Activated CD4-positive, alpha-beta memory T cell treated with anti-CD3 and anti-CD28 coated beads, Interleukin-2, amount 10 ng/mL, durations not matched to agents 7 days and 5 days (primary cell): ENCODE measurements at regions of chr10 and their contacts with region 1.

Region 1: DNA sequence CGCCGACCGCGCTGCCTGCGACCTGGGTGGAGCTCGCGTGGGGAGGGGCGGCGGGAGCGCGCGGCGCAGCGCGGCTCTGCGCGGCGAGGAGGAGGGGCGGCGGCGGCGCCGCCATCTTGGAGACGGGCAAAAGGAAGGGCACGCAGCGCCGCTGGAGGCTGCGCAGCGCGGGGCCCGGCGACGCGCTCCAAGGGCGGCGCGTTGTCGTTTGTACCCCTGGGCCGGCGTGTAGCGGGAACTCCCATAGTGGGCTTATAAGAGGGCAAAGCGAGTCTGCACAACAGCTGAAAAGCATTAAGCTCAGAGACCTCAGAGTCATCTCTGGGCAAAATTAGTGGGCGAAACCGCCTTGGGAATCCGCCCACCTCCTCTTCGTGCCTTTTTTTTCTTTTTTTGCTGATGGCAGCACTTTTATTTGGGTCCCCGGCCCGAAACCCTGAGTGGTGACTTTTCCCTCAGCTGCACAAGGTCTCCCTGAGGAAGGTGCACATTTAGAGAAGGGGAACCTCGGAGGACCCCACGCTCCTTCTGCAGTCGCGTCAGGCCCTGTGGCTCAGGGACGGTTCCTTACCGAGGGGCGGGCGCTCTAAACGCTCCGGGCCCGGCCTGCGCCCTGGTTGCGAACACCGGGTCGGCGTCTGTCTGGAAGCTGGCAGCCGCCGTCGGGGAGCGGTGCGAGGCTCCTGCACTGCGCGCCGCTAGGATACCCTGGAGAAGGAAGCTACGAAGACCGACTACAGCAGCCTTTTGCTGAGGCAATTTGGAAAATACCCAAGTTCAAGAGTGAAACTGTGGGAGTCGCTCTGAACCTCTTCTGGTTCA is 428 bp upstream of the MCMBP start:
- DNase-seq: peak; percentile 91
- H3K4me3 Mint-ChIP-seq: peak overlapping the region; percentile 78
- H3K27ac Mint-ChIP-seq: peak overlapping the region; percentile 82
- H3K4me1 Mint-ChIP-seq: peaks cover 35% of the 10 kb centered on the region
- H3K27me3 Mint-ChIP-seq: no peaks in the 10 kb centered on the region

Region 2: DNA sequence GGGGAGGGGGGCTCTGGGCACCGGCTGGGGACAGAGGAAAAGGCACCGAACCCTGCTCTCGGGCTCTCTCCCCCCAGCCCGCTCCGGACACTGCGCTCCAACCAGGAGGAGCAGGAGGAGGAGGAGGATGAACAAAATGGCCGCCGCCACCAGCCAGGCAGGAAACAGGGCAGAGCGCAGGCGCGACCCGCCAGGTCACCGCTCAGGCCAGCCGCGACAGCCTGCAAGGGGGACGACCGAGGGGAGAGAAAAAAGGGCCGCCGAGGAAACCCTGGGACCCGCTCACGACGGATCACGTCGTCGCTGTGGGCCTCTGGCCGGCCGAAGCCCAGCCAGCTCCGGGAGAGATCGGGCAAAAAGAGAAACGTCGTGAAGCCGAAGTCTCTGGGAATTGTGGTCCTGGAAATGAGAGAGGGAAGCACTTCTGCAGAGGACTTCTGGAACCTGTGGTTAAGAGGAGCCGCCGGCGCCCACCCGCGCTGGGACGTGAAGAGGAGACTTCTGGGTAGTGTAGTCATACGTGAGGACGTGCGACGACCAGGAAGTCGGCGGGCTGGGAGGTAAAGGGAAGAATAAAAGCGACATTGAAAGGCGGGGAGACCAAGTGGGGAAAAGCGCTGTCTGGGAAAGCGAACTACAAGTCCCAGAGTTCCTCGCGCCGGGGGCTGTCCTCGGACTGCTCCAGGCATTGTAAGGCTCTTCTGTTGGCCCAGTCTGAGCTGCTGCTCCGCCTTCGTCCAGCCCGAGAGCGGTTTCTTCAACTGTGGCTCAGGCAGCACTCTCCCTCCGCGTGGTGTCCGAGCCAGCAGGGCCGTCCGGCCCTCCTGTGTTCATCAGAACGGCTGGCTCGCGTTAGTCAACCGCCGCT is 276.3 kb before region 1 on chr10 and contains the start of gene TIAL1:
- CTCF ChIA-PET with region 1: no interaction called
- POLR2A ChIA-PET with region 1: interaction called, 18 read pairs
- DNase-seq: peak; percentile 96
- H3K4me3 Mint-ChIP-seq: peak within 1 kb of the TSS; percentile 92
- H3K27ac Mint-ChIP-seq: peak within 1 kb of the TSS; percentile 97
- H3K4me1 Mint-ChIP-seq: peaks cover 45% of the 10 kb centered on the region
- H3K27me3 Mint-ChIP-seq: no peaks in the 10 kb centered on the region
- total RNA-seq, gene TIAL1: 168 to 170 TPM

Region 3: DNA sequence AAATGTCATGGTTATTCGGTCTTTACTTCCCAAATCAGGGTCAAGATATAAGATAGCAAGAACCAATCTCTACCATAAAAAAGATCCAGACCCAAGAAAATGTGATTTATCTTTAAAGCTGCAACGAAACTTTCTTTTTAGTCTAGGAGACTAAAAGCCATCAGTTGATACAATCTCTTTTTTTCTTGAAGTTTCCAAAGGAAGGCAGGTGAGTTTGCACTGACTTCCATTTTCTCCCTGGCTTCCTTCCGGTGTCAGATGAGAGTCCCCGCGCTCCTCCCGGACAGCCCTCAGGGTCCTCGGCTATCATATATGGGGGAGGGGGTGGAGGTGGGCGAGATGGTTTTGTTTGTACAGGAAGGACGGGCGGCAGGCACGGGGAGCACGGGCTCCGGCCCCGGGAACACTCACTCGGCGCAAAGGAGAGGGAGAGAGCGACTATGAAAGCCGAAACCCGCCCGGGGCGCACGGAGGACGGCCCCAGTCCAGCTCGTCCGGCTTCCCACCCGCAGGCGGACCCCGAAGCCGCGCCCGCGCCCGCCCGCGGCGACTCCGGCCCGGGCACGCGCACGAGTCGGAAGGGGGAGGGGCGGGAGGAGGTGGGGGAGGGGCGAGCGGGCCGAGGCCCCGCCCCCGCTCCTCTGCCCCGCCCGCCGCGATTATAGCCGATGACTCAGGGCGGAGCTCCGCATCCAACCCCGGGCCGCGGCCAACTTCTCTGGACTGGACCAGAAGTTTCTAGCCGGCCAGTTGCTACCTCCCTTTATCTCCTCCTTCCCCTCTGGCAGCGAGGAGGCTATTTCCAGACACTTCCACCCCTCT is 222.2 kb before region 1 on chr10 and contains the start of gene BAG3:
- CTCF ChIA-PET with region 1: interaction called, 3 read pairs
- POLR2A ChIA-PET with region 1: interaction called, 37 read pairs
- DNase-seq: peak; percentile 86
- H3K4me3 Mint-ChIP-seq: peak within 1 kb of the TSS; percentile 95
- H3K27ac Mint-ChIP-seq: peak within 1 kb of the TSS; percentile 91
- H3K4me1 Mint-ChIP-seq: peaks cover 43% of the 10 kb centered on the region
- H3K27me3 Mint-ChIP-seq: peaks cover 3% of the 10 kb centered on the region
- total RNA-seq, gene BAG3: 26.3 to 27.2 TPM

Region 4: GRCh38 chr10:119705434-119705831 is 167.6 kb before region 1 on chr10:
- CTCF ChIA-PET with region 1: no interaction called
- POLR2A ChIA-PET with region 1: interaction called, 19 read pairs
- DNase-seq: no peak
- H3K4me3 Mint-ChIP-seq: peak overlapping the region; percentile 72
- H3K27ac Mint-ChIP-seq: peak overlapping the region; percentile 92
- H3K4me1 Mint-ChIP-seq: peaks cover 57% of the 10 kb centered on the region
- H3K27me3 Mint-ChIP-seq: no peaks in the 10 kb centered on the region

Region 5: GRCh38 chr10:119750391-119751230 is 122.5 kb before region 1 on chr10:
- CTCF ChIA-PET with region 1: interaction called, 12 read pairs
- POLR2A ChIA-PET with region 1: interaction called, 4 read pairs
- DNase-seq: peak; percentile 69
- H3K4me3 Mint-ChIP-seq: no peak overlapping the region
- H3K27ac Mint-ChIP-seq: no peak overlapping the region
- H3K4me1 Mint-ChIP-seq: peaks cover 5% of the 10 kb centered on the region
- H3K27me3 Mint-ChIP-seq: no peaks in the 10 kb centered on the region

Region 6: DNA sequence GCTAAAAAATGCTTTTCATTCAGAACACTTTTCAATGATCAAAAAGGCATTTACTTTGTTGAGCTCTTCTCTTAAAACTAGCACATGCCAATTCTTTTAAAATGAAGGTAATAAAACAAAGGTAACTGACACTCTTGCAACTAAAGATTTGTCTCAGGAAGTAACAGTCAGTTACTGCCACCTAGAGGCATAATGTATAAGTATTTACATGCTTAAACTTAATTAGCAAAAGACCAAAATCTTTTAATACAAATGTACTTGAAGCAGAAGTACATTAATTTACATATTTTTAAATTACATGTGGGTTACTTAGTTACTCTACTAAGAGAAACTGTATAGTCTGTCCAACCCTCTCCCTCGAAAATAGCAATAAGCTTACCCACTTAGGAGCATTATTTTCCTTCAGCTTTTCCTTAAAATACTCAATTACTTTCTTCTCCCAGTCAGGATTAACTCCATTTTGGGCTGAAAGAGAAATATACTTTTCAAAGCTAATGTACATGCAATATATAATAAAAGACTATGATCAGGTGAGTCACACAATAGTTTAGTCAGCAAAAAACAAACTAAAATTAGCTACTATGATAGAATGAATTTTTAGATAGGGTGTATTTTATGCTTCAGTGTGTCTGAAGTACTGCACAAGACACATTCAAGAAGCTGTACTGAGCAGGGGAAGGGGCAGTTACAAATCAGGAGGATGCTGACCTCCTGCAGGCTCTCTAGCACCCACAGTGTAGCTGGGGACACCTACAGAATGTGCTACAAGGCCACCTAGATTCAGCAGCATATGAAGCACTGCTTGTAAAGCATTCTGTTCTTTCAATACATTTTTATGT is 13.4 kb before region 1 on chr10:
- CTCF ChIA-PET with region 1: interaction called, 51 read pairs
- POLR2A ChIA-PET with region 1: interaction called, 69 read pairs
- DNase-seq: no peak
- H3K4me3 Mint-ChIP-seq: no peak overlapping the region
- H3K27ac Mint-ChIP-seq: no peak overlapping the region
- H3K4me1 Mint-ChIP-seq: peaks cover 45% of the 10 kb centered on the region
- H3K27me3 Mint-ChIP-seq: no peaks in the 10 kb centered on the region

Region 7: DNA sequence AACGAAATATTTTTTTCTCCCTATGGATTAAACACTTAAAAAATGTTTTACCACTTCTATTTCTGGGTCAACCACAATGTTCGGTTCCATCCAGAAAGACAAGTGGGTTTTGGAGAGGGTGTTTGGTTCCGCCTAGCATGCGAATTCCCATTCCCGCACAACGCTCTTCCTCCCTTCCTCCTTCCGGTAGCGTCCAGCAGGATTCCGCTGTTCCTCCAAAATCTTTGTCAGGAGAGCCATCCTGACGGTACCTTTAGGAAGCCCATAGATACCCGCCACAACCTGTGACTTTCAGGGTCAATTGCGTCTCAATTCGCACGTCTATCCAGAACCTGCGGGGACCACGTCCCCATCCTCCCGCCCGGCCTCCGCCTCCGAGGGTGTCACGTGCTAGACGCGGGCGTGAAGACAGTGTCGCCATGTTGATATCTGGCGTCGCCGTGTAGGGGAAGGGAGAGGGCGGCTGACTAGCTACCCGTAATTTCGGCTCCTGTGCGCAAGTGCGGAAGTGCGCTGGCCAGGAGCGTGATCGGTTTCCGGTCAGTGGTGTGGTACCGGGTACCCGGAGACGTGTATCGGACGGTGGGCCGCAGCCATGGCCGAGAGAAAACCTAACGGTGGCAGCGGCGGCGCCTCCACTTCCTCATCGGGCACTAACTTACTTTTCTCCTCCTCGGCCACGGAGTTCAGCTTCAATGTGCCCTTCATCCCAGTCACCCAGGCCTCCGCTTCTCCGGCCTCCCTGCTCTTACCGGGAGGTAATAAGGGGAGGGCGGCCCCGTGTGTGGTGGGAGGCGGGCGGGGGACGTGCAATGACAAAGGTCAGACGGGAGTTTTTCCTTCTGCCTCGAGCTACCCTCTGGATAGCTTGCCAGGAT is 19.4 kb after region 1 on chr10 and contains the start of gene SEC23IP:
- CTCF ChIA-PET with region 1: interaction called, 29 read pairs
- POLR2A ChIA-PET with region 1: interaction called, 94 read pairs
- DNase-seq: peak; percentile 94
- H3K4me3 Mint-ChIP-seq: peak within 1 kb of the TSS; percentile 99
- H3K27ac Mint-ChIP-seq: peak within 1 kb of the TSS; percentile 86
- H3K4me1 Mint-ChIP-seq: peaks cover 45% of the 10 kb centered on the region
- H3K27me3 Mint-ChIP-seq: no peaks in the 10 kb centered on the region
- total RNA-seq, gene SEC23IP: 58.3 to 69.3 TPM